Sciatic nerve (tissue), 2 donors: ENCODE measurements at regions of chr5 and their contacts with region 1.

Region 1: GRCh38 chr5:164306662-164307061 is 801.2 kb downstream of the MAT2B start:
- DNase-seq: no peak
- ATAC-seq: no peak

Region 2: GRCh38 chr5:164255598-164256213 is 51.0 kb before region 1 on chr5:
- intact Hi-C with region 1: loop called (anchors 2 kb)
- DNase-seq: no peak
- ATAC-seq: no peak

Region 3: DNA sequence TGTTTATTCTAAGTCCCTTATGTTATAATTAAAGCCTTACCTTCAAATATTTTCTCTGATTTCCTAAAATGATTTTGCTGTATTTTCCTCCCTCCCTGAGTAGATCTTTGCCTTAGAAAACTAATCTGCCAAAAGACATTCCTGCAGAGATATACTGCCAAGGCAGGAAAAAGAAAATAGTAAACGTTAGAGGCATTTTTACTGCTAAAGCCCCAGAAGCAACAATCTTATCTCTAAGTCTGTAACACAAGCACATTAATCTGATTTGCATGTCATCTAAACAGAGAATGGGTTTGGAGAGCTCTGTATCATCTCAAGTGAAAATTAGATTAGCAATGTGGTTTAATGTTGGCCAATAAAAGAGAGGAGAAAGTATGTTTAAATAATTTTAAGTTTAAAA is 46.5 kb after region 1 on chr5:
- intact Hi-C with region 1: no loop called
- DNase-seq: no peak
- ATAC-seq: no peak

Region 4: DNA sequence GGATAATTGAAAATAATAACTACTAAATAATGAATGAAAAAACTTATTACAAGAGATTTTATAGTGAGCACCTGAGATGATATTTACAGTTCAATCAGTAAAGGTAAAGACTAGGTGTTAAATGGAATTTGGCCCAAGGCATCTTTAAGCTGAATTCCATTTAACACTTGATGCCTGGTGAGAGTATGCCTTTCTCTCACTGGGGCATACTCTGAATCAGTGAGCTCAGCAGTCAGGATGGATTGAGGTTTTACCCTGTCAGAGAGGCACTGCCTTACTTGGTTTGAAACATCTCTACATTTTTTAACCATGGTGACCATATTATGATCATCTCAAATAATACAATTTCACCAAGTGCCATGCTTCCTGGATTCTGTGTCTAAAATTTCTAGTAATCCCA is 615.1 kb after region 1 on chr5:
- intact Hi-C with region 1: no loop called
- DNase-seq: no peak
- ATAC-seq: no peak